ENCODE measurements at regions of chr2 and their contacts with region 1.

Region 1: GRCh38 chr2:171893824-171894611 is at the start of gene SLC25A12:
- DNase-seq: peak; percentile 88
- ATAC-seq: peak; percentile 98
- H3K4me3 Mint-ChIP-seq: peak within 1 kb of the TSS; percentile 100
- H3K27ac Mint-ChIP-seq: peak within 1 kb of the TSS; percentile 98
- H3K4me1 Mint-ChIP-seq: peaks cover 30% of the 10 kb centered on the region
- H3K27me3 Mint-ChIP-seq: no peaks in the 10 kb centered on the region
- total RNA-seq, gene SLC25A12: 19.5 to 22.4 TPM

Region 2: DNA sequence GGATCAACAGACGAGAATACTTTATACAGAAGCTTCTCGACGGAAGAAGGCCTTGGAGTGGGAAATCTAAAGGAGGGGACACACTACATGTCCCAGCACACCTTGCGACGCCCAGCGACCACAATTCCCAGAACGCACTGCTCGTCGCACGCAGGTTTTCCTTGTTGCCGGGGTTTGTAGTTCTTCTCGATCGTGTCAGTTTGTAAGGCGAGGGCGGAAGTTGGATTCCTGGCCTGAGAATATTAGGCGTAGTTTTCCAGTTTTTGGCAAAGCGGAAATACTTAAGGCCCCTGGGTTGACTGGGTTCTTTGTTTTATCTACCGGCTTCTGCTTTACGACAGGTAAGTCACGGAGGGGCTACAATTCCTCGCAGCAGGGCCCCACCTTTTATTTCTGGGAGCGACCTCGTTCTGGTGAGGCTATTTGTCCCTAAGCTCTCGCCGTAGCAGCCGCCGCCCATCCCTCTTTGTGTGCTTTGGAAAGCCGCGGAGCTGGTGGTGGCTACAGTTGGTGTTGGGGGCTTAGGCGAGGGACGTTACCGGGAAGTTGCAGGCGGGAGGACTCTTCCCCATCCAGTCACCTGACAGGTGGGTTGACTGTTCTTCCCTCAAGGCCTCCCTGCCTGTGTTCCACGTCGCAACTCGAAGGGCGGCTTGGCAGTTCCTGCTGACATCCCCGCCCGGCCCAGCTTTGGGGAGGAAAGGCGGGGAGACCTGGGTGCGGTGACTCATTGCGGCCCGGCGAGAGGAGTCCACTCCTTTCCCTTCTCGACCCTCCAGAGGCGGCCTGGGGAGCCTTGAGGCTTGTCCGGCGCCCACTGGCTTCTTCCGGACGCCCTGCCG is 206.5 kb before region 1 on chr2 and contains the start of gene DYNC1I2:
- CTCF ChIA-PET with region 1: no interaction called
- POLR2A ChIA-PET with region 1: no interaction called
- intact Hi-C with region 1: no loop called
- DNase-seq: peak; percentile 86
- ATAC-seq: peak; percentile 95
- H3K4me3 Mint-ChIP-seq: peak within 1 kb of the TSS; percentile 83
- H3K27ac Mint-ChIP-seq: peak within 1 kb of the TSS; percentile 90
- H3K4me1 Mint-ChIP-seq: peaks cover 15% of the 10 kb centered on the region
- H3K27me3 Mint-ChIP-seq: no peaks in the 10 kb centered on the region
- total RNA-seq, gene DYNC1I2: 46.2 to 51.1 TPM

Region 3: DNA sequence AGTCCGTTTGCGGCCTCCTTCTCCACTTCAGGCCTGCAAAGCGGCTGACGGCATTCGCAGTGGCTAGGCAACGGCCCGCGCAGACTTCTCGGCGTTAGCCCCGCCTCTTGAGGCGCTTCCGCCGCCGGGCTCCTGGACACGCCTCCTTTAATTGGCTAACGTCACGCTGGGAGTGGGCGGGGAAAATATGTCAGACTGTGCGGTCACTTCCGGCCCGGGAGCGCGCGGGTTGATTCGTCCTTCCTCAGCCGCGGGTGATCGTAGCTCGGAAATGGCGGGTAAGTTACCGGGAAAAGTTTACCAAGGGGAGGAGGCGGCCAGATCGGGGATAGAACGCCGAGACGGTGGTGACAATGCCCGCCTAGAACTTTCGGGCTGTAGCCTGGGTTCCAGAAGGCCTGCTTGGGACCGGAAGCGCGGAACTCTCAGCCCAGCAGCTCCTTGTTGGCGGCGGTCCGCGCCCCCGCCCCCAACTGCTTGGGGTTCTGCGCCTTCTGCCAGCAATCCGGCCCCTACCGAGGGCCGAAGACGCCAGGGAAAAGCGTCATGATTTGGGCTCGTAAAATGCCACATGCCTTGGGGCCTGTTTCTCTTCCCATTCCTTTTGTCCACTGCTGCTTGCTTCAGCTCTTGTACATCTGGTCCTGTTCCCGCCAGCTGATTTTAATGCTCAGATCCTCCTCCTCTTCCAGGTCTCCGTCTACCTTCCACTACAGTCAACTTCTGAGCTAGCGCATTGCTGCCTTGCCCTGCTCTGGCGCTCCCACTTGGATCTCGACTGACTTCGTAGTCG is 28.4 kb after region 1 on chr2 and contains the start of gene HAT1:
- CTCF ChIA-PET with region 1: interaction called, 5 read pairs
- POLR2A ChIA-PET with region 1: interaction called, 5 read pairs
- intact Hi-C with region 1: loop called (anchors 1 kb)
- DNase-seq: peak; percentile 99
- ATAC-seq: peak; percentile 96
- H3K4me3 Mint-ChIP-seq: peak within 1 kb of the TSS; percentile 94
- H3K27ac Mint-ChIP-seq: peak within 1 kb of the TSS; percentile 98
- H3K4me1 Mint-ChIP-seq: peaks cover 38% of the 10 kb centered on the region
- H3K27me3 Mint-ChIP-seq: no peaks in the 10 kb centered on the region
- total RNA-seq, gene HAT1: 88.5 to 92.6 TPM

Region 4: GRCh38 chr2:172358691-172359556 is 464.9 kb after region 1 on chr2:
- CTCF ChIA-PET with region 1: no interaction called
- POLR2A ChIA-PET with region 1: no interaction called
- intact Hi-C with region 1: no loop called
- DNase-seq: no peak
- ATAC-seq: no peak
- H3K4me3 Mint-ChIP-seq: no peak overlapping the region
- H3K27ac Mint-ChIP-seq: no peak overlapping the region
- H3K4me1 Mint-ChIP-seq: peaks cover 5% of the 10 kb centered on the region
- H3K27me3 Mint-ChIP-seq: no peaks in the 10 kb centered on the region

Region 5: GRCh38 chr2:172373766-172374165 is 479.7 kb after region 1 on chr2:
- CTCF ChIA-PET with region 1: no interaction called
- POLR2A ChIA-PET with region 1: no interaction called
- intact Hi-C with region 1: no loop called
- DNase-seq: no peak
- ATAC-seq: no peak
- H3K4me3 Mint-ChIP-seq: no peak overlapping the region
- H3K27ac Mint-ChIP-seq: no peak overlapping the region
- H3K4me1 Mint-ChIP-seq: no peaks in the 10 kb centered on the region
- H3K27me3 Mint-ChIP-seq: no peaks in the 10 kb centered on the region

Measured in activated CD4-positive, alpha-beta T cell treated with anti-CD3 and anti-CD28 coated beads for 36 hours (primary cell).